Naive thymus-derived CD4-positive, alpha-beta T cell (primary cell): ENCODE measurements at regions of chr13 and their contacts with region 1.

Region 1: GRCh38 chr13:77492982-77493381 is 42.5 kb upstream of the SCEL start:
- DNase-seq: peak in 2 of 9 donors; percentile 16 to 22
- ATAC-seq: peak; percentile 38
- H3K4me3 ChIP-seq: no peak overlapping the region
- H3K4me3 Mint-ChIP-seq: no peak overlapping the region
- H3K27ac ChIP-seq: no peak overlapping the region
- H3K27ac Mint-ChIP-seq: no peak overlapping the region
- H3K4me1 ChIP-seq: no peaks in the 10 kb centered on the region
- H3K4me1 Mint-ChIP-seq: peaks cover 0 to 1% (median 0%) of the 10 kb centered on the region in 7 donors
- H3K27me3 ChIP-seq: no peaks in the 10 kb centered on the region
- H3K27me3 Mint-ChIP-seq: peaks cover 0 to 6% (median 0%) of the 10 kb centered on the region in 5 donors

Region 2: DNA sequence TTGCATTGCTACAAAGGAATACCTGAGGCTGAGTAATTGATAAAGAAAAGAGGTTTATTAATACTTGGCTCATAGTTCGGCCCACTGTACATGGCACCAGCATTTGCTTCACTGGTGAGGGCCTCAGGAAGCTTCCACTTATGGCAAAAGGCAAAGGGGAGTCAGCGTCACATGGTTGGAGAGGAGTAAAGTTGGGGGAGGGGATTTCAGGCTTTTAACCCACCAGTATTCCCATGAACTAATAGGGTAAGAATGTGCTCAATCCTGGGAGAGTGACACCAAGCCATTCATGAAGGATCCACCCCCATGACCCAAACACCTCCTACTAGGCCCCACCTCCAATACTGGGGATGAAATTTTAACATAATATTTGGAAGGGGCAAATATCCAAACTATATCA is 83.6 kb before region 1 on chr13:
- CTCF ChIA-PET with region 1: no interaction called
- POLR2A ChIA-PET with region 1: no interaction called
- intact Hi-C with region 1: no loop called
- DNase-seq: no peak
- ATAC-seq: no peak
- H3K4me3 ChIP-seq: no peak overlapping the region
- H3K4me3 Mint-ChIP-seq: no peak overlapping the region
- H3K27ac ChIP-seq: no peak overlapping the region
- H3K27ac Mint-ChIP-seq: no peak overlapping the region
- H3K4me1 ChIP-seq: no peaks in the 10 kb centered on the region
- H3K4me1 Mint-ChIP-seq: no peaks in the 10 kb centered on the region
- H3K27me3 ChIP-seq: no peaks in the 10 kb centered on the region
- H3K27me3 Mint-ChIP-seq: no peaks in the 10 kb centered on the region

Region 3: GRCh38 chr13:77460195-77460594 is 32.8 kb before region 1 on chr13:
- CTCF ChIA-PET with region 1: no interaction called
- POLR2A ChIA-PET with region 1: no interaction called
- intact Hi-C with region 1: no loop called
- DNase-seq: no peak
- ATAC-seq: peak; percentile 89
- H3K4me3 ChIP-seq: no peak overlapping the region
- H3K4me3 Mint-ChIP-seq: no peak overlapping the region
- H3K27ac ChIP-seq: no peak overlapping the region
- H3K27ac Mint-ChIP-seq: no peak overlapping the region
- H3K4me1 ChIP-seq: no peaks in the 10 kb centered on the region
- H3K4me1 Mint-ChIP-seq: peaks cover 0 to 6% (median 0%) of the 10 kb centered on the region in 7 donors
- H3K27me3 ChIP-seq: no peaks in the 10 kb centered on the region
- H3K27me3 Mint-ChIP-seq: peaks cover 0 to 21% (median 8%) of the 10 kb centered on the region in 5 donors

Region 4: GRCh38 chr13:77565635-77566034 is 72.7 kb after region 1 on chr13:
- CTCF ChIA-PET with region 1: no interaction called
- POLR2A ChIA-PET with region 1: no interaction called
- intact Hi-C with region 1: loop called (anchors 1 to 5 kb)
- DNase-seq: peak in 5 of 9 donors; percentile 7 to 26 (median 18)
- ATAC-seq: peak; percentile 41
- H3K4me3 ChIP-seq: no peak overlapping the region
- H3K4me3 Mint-ChIP-seq: no peak overlapping the region
- H3K27ac ChIP-seq: no peak overlapping the region
- H3K27ac Mint-ChIP-seq: no peak overlapping the region
- H3K4me1 ChIP-seq: no peaks in the 10 kb centered on the region
- H3K4me1 Mint-ChIP-seq: no peaks in the 10 kb centered on the region
- H3K27me3 ChIP-seq: no peaks in the 10 kb centered on the region
- H3K27me3 Mint-ChIP-seq: peaks cover 0 to 18% (median 8%) of the 10 kb centered on the region in 5 donors